ENCODE measurements at regions of chr1 and their contacts with region 1.

Region 1: GRCh38 chr1:19212167-19212566 is 2.1 kb upstream of the UBR4 start:
- DNase-seq: no peak
- H3K4me3 ChIP-seq: no peak overlapping the region
- H3K27ac ChIP-seq: no peak overlapping the region
- H3K4me1 ChIP-seq: peaks cover 0 to 6% of the 10 kb centered on the region in 2 donors
- H3K27me3 ChIP-seq: no peaks in the 10 kb centered on the region
- CTCF ChIP-seq: no peak
- POLR2A ChIP-seq: no peak

Region 2: DNA sequence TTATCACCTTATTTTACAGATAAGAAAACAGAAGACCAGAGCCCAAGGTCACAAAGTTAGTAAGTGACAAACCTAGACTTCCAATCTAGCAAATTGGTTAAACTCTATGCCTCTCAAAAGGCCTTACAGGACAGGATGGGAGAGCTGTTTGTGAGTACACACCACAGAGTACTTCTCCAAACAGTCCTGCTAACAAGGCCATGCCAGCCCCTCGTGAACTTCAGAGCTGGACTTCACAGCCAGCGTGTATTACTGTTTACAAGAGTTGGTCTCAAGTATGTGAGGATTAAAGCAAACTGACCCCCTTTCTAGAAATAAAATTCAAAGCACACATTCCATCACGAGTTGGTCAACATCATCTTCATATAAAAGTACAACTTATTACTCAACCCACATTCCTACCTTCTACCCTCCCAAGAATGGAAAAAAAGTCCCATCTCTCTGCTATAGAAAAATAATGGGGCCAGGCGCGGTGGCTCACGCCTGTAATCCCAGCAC is 17.7 kb after region 1 on chr1:
- intact Hi-C with region 1: loop called (anchors 1 kb)
- DNase-seq: no peak
- H3K4me3 ChIP-seq: no peak overlapping the region
- H3K27ac ChIP-seq: no peak overlapping the region
- H3K4me1 ChIP-seq: no peaks in the 10 kb centered on the region
- H3K27me3 ChIP-seq: no peaks in the 10 kb centered on the region
- CTCF ChIP-seq: no peak
- POLR2A ChIP-seq: no peak

Measured in breast epithelium (tissue), 4 donors.